ENCODE measurements at regions of chr13 and their contacts with region 1.

Region 1: DNA sequence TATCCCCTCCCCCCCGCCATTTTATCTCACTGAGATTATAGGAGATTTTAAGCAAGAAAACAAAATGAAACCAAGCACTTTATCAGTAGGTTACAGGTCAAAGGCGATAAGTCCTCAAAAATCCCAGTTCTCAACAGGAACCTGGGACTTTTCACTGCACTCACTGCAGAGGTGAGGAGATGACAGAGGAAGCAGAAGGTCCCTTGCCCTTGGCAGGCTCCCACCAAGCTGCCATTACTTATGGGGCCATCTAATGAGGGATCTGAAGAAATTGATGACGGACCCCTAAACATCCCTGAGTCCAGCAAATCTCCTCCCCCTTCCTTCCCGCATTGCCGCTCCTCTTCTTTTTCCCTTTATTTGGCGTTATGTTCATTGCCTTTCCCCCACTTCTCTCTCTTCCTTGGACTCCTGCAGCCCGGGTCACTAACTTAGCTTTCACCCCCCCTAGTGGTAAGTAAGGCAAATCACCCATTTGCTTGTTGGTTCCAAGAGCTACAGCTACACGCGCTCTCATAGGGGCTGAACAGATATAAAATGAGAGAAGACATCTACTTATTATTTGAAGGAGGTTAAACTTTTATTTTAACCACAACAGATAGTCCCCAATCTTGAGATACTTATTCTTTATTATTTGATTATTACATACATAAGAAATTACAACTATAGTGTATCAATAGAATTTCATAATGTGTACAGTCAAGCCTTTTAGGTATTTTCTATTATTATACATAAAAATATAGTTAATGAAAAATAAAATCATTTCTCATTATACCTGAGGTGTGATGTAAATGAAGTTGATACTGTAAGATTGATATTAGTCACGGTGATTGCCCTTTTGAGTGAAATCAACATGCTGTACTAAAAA is 52.0 kb upstream of the ARGLU1 start:
- DNase-seq: peak; percentile 34
- ATAC-seq: peak; percentile 87
- H3K4me3 Mint-ChIP-seq: no peak overlapping the region
- H3K27ac Mint-ChIP-seq: no peak overlapping the region
- H3K4me1 Mint-ChIP-seq: no peaks in the 10 kb centered on the region
- H3K27me3 Mint-ChIP-seq: peaks cover 12% of the 10 kb centered on the region

Region 2: GRCh38 chr13:105219651-105220050 is 1400.3 kb before region 1 on chr13:
- CTCF ChIA-PET with region 1: no interaction called
- POLR2A ChIA-PET with region 1: no interaction called
- intact Hi-C with region 1: no loop called
- DNase-seq: no peak
- ATAC-seq: no peak
- H3K4me3 Mint-ChIP-seq: no peak overlapping the region
- H3K27ac Mint-ChIP-seq: no peak overlapping the region
- H3K4me1 Mint-ChIP-seq: no peaks in the 10 kb centered on the region
- H3K27me3 Mint-ChIP-seq: peaks cover 1% of the 10 kb centered on the region

Region 3: DNA sequence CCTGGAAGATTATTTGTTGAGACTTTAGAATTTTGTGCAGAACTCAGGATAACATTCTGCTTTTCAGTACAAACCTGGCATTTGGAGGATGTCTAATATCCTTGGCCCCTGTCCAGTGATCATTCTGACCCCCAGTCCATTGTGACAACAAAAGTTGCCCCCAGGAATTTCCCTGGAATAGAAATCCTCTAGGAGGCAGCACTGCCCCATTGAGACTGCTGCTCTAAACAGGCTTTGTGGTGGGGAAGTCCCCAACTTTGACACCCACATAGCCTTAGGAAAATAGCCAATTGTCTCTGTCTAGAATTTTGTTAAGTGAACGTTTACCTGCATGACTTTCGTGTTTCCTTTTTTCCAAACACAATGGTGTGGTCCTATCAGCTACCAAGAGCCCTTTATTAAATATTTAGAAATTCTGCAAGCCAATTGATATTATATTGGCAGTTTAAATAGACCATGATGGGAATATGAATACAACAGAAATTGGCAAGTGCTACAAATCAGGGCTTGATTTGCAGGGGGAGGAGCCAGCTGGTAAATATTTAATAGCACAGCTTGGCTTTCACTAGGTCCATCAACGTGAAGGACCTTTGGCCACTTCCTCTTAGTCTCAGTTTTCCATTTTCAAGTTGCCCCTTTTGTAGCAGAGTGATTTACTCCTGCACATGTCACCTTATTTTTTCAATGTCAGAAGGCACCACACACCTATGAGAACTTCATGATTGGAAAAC is 536.1 kb before region 1 on chr13:
- CTCF ChIA-PET with region 1: no interaction called
- POLR2A ChIA-PET with region 1: no interaction called
- intact Hi-C with region 1: loop called in 1 of 2 experiments (anchors 5 kb)
- DNase-seq: peak; percentile 33
- ATAC-seq: peak; percentile 51
- H3K4me3 Mint-ChIP-seq: no peak overlapping the region
- H3K27ac Mint-ChIP-seq: no peak overlapping the region
- H3K4me1 Mint-ChIP-seq: no peaks in the 10 kb centered on the region
- H3K27me3 Mint-ChIP-seq: peaks cover 3% of the 10 kb centered on the region

Region 4: GRCh38 chr13:106630650-106631049 is 10.7 kb after region 1 on chr13:
- CTCF ChIA-PET with region 1: interaction called, 22 read pairs
- POLR2A ChIA-PET with region 1: no interaction called
- intact Hi-C with region 1: no loop called
- DNase-seq: no peak
- ATAC-seq: no peak
- H3K4me3 Mint-ChIP-seq: no peak overlapping the region
- H3K27ac Mint-ChIP-seq: no peak overlapping the region
- H3K4me1 Mint-ChIP-seq: no peaks in the 10 kb centered on the region
- H3K27me3 Mint-ChIP-seq: peaks cover 14% of the 10 kb centered on the region

Region 5: GRCh38 chr13:106917673-106918556 is 298.0 kb after region 1 on chr13:
- CTCF ChIA-PET with region 1: no interaction called
- POLR2A ChIA-PET with region 1: no interaction called
- intact Hi-C with region 1: loop called in 1 of 2 experiments (anchors 10 kb)
- DNase-seq: peak; percentile 84
- ATAC-seq: peak; percentile 95
- H3K4me3 Mint-ChIP-seq: peak overlapping the region; percentile 68
- H3K27ac Mint-ChIP-seq: peak overlapping the region; percentile 55
- H3K4me1 Mint-ChIP-seq: peaks cover 5% of the 10 kb centered on the region
- H3K27me3 Mint-ChIP-seq: peaks cover 34% of the 10 kb centered on the region

Region 6: DNA sequence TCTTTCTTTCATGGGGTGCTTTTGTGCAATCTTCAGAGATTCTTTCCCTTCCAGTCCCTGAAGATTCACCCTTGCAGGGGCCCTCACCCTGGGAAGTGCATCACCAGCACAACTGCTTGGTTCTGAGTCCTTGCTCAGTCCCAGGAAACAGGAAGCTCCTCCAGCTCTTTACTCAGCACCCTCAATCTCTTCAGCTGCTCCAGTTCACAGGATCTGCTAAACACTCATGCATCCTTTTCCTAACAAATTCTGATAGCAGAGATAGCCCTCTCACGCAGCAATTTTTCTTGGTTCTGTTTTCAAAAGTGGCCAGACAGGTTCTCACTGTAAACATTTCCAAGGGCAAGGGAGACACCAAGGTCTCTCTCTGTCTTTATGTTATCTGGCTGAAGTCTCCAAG is 772.3 kb after region 1 on chr13:
- CTCF ChIA-PET with region 1: no interaction called
- POLR2A ChIA-PET with region 1: no interaction called
- intact Hi-C with region 1: no loop called
- DNase-seq: no peak
- ATAC-seq: no peak
- H3K4me3 Mint-ChIP-seq: no peak overlapping the region
- H3K27ac Mint-ChIP-seq: no peak overlapping the region
- H3K4me1 Mint-ChIP-seq: no peaks in the 10 kb centered on the region
- H3K27me3 Mint-ChIP-seq: no peaks in the 10 kb centered on the region

Measured in activated CD4-positive, alpha-beta T cell treated with anti-CD3 and anti-CD28 coated beads for 36 hours (primary cell).